MCF 10A (cell line): ENCODE measurements at regions of chr5 and their contacts with region 1.

Region 1: DNA sequence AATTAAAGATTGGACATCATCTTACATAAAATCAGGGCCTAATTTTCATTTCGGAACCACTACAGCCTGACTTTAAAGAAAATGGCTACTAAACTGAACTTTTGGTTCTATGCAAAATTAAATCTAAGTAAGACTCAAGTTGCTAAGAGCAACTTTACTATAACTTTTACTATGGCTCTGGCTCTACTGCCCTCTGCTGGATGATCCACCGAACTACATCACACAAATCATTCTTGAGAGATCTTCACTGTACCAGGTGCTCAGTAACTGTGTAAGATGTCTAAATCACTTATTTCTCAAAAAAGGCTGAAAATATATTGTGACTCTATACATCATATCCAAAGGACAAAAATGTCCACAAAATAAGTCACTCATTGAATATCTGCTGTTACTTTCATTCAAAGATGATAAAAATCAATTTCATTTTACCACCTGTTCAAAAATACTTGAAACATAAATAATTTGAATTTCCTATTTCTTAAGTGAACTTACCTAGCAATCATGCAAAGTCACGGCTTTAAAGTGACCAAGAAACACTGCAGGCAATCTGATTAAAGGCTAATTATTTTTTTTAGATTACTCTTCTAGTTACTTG is 13.5 kb downstream of the MOCS2 start:
- DNase-seq: peak; percentile 70
- H3K4me3 Mint-ChIP-seq: no peak overlapping the region
- H3K27ac Mint-ChIP-seq: no peak overlapping the region
- H3K4me1 Mint-ChIP-seq: peaks cover 7% of the 10 kb centered on the region
- H3K27me3 Mint-ChIP-seq: no peaks in the 10 kb centered on the region
- CTCF ChIP-seq: peak; percentile 69

Region 2: GRCh38 chr5:52787600-52788504 is 308.2 kb before region 1 on chr5 and contains the starts of genes ITGA1 and PELO:
- CTCF ChIA-PET with region 1: no interaction called
- POLR2A ChIA-PET with region 1: interaction called, 4 read pairs
- intact Hi-C with region 1: loop called (anchors 5 kb)
- DNase-seq: peak; percentile 83
- H3K4me3 Mint-ChIP-seq: peak within 1 kb of the TSS; percentile 94
- H3K27ac Mint-ChIP-seq: peak within 1 kb of the TSS; percentile 72
- H3K4me1 Mint-ChIP-seq: peaks cover 28% of the 10 kb centered on the region
- H3K27me3 Mint-ChIP-seq: no peaks in the 10 kb centered on the region
- CTCF ChIP-seq: no peak
- total RNA-seq, gene ITGA1: 5.3 and 7.7 TPM in 2 replicates
- total RNA-seq, gene PELO: 22.5 and 23.1 TPM in 2 replicates

Region 3: DNA sequence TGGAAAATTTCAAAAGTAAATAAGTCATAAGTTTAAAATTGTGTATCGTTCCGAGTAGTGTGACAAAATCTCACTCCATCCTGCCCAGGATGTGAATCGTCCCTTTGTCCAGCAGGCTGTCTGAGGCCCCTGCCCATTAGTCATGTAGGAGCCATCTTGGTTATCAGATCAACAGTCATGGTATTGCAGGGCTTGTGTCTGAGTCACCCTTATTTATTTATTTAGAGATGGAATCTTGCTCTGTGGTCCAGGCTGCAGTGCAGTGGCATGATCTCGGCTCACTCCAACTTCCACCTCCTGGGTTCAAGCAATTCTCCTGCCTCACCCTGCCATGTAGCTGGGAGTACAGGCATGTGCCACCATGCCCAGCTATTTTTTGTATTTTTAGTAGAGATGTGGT is 76.7 kb before region 1 on chr5:
- CTCF ChIA-PET with region 1: no interaction called
- POLR2A ChIA-PET with region 1: no interaction called
- intact Hi-C with region 1: no loop called
- DNase-seq: peak; percentile 65
- H3K4me3 Mint-ChIP-seq: no peak overlapping the region
- H3K27ac Mint-ChIP-seq: no peak overlapping the region
- H3K4me1 Mint-ChIP-seq: no peaks in the 10 kb centered on the region
- H3K27me3 Mint-ChIP-seq: no peaks in the 10 kb centered on the region
- CTCF ChIP-seq: no peak

Region 4: DNA sequence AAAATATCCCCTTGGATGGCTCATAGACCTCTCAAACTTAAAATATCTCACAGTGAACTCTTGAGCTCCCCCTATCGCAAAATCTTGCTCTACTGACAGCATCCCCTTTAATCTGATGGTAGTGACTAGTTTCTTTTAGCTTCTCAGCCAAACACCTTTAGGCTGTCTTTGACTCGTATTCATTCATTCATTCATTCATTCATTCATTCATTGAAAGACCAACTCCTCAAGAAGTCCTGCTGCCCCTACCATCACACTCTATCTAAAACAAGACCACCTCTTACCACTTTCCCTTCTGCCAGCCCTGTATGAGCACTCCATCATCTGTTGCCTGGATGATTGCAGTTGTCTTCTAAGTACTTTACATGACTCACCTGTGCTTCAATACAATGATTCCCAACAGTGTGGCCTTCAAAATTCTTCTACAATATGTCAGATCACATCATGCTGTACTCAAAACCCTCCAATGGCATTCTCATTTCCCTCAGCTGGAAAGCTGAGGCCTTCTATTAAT is 60.1 kb before region 1 on chr5:
- CTCF ChIA-PET with region 1: interaction called, 10 read pairs
- POLR2A ChIA-PET with region 1: interaction called, 3 read pairs
- intact Hi-C with region 1: no loop called
- DNase-seq: peak; percentile 64
- H3K4me3 Mint-ChIP-seq: no peak overlapping the region
- H3K27ac Mint-ChIP-seq: peak overlapping the region; percentile 76
- H3K4me1 Mint-ChIP-seq: peaks cover 43% of the 10 kb centered on the region
- H3K27me3 Mint-ChIP-seq: no peaks in the 10 kb centered on the region
- CTCF ChIP-seq: peak; percentile 23

Region 5: GRCh38 chr5:53109443-53110127 is 13.6 kb after region 1 on chr5 and contains the start of gene MOCS2:
- CTCF ChIA-PET with region 1: interaction called, 14 read pairs
- POLR2A ChIA-PET with region 1: interaction called, 9 read pairs
- intact Hi-C with region 1: no loop called
- DNase-seq: peak; percentile 89
- H3K4me3 Mint-ChIP-seq: peak within 1 kb of the TSS; percentile 97
- H3K27ac Mint-ChIP-seq: peak within 1 kb of the TSS; percentile 80
- H3K4me1 Mint-ChIP-seq: peaks cover 18% of the 10 kb centered on the region
- H3K27me3 Mint-ChIP-seq: no peaks in the 10 kb centered on the region
- CTCF ChIP-seq: no peak
- total RNA-seq, gene MOCS2: 31.4 and 43.0 TPM in 2 replicates